BJ (cell line): ENCODE measurements at regions of chr17 and their contacts with region 1.

Region 1: GRCh38 chr17:8118769-8119580 is 661 bp upstream of the ALOXE3 start:
- DNase-seq: no peak
- H3K4me3 ChIP-seq: peak overlapping the region; percentile 53
- H3K27me3 ChIP-seq: peaks cover 17% of the 10 kb centered on the region
- CTCF ChIP-seq: peak; percentile 97

Region 2: GRCh38 chr17:8073627-8074484 is 45.1 kb before region 1 on chr17:
- CTCF ChIA-PET with region 1: interaction called, 54 read pairs
- POLR2A ChIA-PET with region 1: no interaction called
- DNase-seq: no peak
- H3K4me3 ChIP-seq: no peak overlapping the region
- H3K27me3 ChIP-seq: peaks cover 52% of the 10 kb centered on the region
- CTCF ChIP-seq: peak; percentile 94

Region 3: GRCh38 chr17:8100111-8100510 is 18.9 kb before region 1 on chr17:
- CTCF ChIA-PET with region 1: interaction called, 21 read pairs
- POLR2A ChIA-PET with region 1: no interaction called
- DNase-seq: no peak
- H3K4me3 ChIP-seq: no peak overlapping the region
- H3K27me3 ChIP-seq: peaks cover 11% of the 10 kb centered on the region; the same call in 1 of the 2 replicates
- CTCF ChIP-seq: no peak

Region 4: GRCh38 chr17:8156246-8156992 is 37.4 kb after region 1 on chr17:
- CTCF ChIA-PET with region 1: interaction called, 32 read pairs
- POLR2A ChIA-PET with region 1: interaction called, 3 read pairs
- DNase-seq: peak; percentile 100
- H3K4me3 ChIP-seq: peak overlapping the region; percentile 48
- H3K27me3 ChIP-seq: no peaks in the 10 kb centered on the region
- CTCF ChIP-seq: 0 out of 2 replicates have a peak, but pooled peaks have one; percentile 7

Region 5: DNA sequence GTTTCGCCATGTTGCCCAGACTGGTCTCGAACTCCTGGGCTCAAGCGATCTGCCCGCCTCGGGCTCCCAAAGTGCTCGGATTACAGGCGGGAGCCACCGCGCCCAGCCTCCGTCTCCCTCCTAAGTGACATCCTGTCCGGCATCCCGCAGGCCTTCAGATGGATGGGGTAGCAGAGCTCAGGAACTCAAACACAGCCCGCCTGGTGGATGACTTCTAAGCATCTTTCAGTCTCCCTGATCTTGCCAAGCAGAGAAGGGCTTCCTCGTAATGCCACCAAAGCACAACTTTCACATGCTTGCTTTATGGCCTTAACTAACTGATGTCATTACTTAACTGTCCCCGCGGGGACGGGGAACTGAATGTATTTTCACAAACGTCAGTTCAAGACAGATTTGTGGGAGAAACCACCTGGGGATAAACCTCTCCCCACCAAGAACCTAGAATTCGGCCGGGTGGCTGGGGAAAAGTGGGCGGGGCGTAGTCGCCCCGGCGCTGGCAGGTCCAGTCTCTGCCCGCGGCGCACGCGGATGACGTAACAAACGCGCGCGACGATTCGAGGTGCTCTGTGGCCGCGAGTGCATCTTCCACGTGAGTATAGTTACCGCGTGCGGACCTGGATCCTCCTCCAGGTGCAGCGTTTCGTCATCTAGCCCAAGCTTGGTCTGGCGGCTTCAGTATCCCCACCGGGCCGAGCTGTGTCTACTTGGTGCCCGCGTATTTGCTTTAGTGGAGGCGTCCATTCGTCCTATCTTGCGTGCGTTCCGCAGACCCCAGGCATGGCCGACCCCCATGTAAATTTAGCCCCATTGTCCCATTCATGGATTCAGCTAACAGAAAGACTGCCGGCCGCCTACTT is 130.0 kb after region 1 on chr17 and contains the start of gene PFAS:
- CTCF ChIA-PET with region 1: interaction called, 10 read pairs
- POLR2A ChIA-PET with region 1: no interaction called
- DNase-seq: peak; percentile 31
- H3K4me3 ChIP-seq: peak within 1 kb of the TSS; percentile 85
- H3K27me3 ChIP-seq: no peaks in the 10 kb centered on the region
- CTCF ChIP-seq: no peak
- polyA plus RNA-seq, gene PFAS: 12.2 and 15.6 TPM in 2 replicates